B cell (primary cell): ENCODE measurements at regions of chr10 and their contacts with region 1.

Region 1: GRCh38 chr10:80144067-80144695 is 11.7 kb downstream of the PLAC9 start:
- DNase-seq: peak; percentile 59
- ATAC-seq: peak; percentile 72
- H3K4me3 ChIP-seq: peak overlapping the region in 4 of 5 experiments; percentile 18 to 55 (median 41)
- H3K4me3 Mint-ChIP-seq: peak overlapping the region; percentile 75
- H3K27ac ChIP-seq: no peak overlapping the region
- H3K27ac Mint-ChIP-seq: peak overlapping the region; percentile 81
- H3K4me1 ChIP-seq: peaks cover 14 to 17% of the 10 kb centered on the region in 2 donors
- H3K4me1 Mint-ChIP-seq: peaks cover 21% of the 10 kb centered on the region
- H3K27me3 ChIP-seq: peaks cover 0 to 2% (median 0%) of the 10 kb centered on the region in 4 experiments
- H3K27me3 Mint-ChIP-seq: peaks cover 21% of the 10 kb centered on the region
- CTCF ChIP-seq: peak; percentile 53

Region 2: GRCh38 chr10:80066809-80067208 is 77.4 kb before region 1 on chr10:
- CTCF ChIA-PET with region 1: no interaction called
- POLR2A ChIA-PET with region 1: no interaction called
- intact Hi-C with region 1: no loop called
- DNase-seq: no peak
- ATAC-seq: no peak
- H3K4me3 ChIP-seq: no peak overlapping the region
- H3K4me3 Mint-ChIP-seq: no peak overlapping the region
- H3K27ac ChIP-seq: no peak overlapping the region
- H3K27ac Mint-ChIP-seq: no peak overlapping the region
- H3K4me1 ChIP-seq: no peaks in the 10 kb centered on the region
- H3K4me1 Mint-ChIP-seq: no peaks in the 10 kb centered on the region
- H3K27me3 ChIP-seq: peaks cover 0 to 3% (median 0%) of the 10 kb centered on the region in 4 experiments
- H3K27me3 Mint-ChIP-seq: peaks cover 7% of the 10 kb centered on the region
- CTCF ChIP-seq: no peak

Region 3: DNA sequence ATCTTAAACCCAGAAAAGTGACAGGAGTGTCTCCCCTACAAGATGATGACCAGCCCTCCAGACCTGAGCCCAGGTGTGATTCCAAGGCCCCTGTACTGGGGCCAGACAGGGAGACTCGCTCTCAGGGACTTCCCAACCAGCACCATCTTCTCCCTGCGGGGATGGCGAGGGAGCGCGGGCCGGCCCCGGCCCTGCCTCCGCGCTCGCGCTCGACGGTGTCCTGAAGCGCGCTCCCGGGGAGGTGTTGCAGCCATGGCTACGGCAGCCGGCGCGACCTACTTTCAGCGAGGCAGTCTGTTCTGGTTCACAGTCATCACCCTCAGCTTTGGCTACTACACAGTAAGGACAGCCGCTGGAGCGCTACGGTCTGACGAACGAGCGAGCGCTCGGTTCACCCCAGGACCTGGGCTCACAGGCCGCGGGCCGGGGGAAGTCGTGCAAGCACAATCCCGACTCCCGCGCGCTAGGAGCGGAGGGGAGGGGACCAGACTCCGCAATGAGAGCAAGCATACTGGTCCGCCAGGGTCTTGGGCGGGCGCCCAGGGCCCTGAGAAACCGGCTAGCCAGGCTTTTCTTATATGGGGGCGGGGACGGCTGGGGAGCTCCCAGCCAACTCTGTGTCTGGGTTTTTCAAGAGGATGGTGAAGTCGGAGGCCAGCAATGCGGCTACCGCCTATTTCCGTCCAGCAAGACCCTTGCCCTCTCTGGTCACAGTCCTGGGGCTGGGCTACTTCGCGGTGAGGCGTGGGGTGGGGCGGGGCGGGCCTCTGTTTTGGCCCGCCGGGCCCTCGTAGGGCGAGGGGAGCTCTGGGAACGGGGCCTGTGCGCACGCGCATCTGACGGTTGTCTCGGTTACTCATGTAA is 65.5 kb before region 1 on chr10 and contains the start of gene TMEM254:
- CTCF ChIA-PET with region 1: interaction called, 8 read pairs
- POLR2A ChIA-PET with region 1: no interaction called
- intact Hi-C with region 1: loop called (anchors 5 kb)
- DNase-seq: peak; percentile 92
- ATAC-seq: peak; percentile 86
- H3K4me3 ChIP-seq: peak within 1 kb of the TSS; percentile 74 to 98 (median 97)
- H3K4me3 Mint-ChIP-seq: peak within 1 kb of the TSS; percentile 97
- H3K27ac ChIP-seq: peak within 1 kb of the TSS; percentile 84 to 90
- H3K27ac Mint-ChIP-seq: peak within 1 kb of the TSS; percentile 92
- H3K4me1 ChIP-seq: peaks cover 11 to 15% of the 10 kb centered on the region in 2 donors
- H3K4me1 Mint-ChIP-seq: peaks cover 16% of the 10 kb centered on the region
- H3K27me3 ChIP-seq: no peaks in the 10 kb centered on the region
- H3K27me3 Mint-ChIP-seq: no peaks in the 10 kb centered on the region
- CTCF ChIP-seq: no peak
- total RNA-seq, gene TMEM254: 13.1 and 13.7 TPM in 2 replicates

Region 4: DNA sequence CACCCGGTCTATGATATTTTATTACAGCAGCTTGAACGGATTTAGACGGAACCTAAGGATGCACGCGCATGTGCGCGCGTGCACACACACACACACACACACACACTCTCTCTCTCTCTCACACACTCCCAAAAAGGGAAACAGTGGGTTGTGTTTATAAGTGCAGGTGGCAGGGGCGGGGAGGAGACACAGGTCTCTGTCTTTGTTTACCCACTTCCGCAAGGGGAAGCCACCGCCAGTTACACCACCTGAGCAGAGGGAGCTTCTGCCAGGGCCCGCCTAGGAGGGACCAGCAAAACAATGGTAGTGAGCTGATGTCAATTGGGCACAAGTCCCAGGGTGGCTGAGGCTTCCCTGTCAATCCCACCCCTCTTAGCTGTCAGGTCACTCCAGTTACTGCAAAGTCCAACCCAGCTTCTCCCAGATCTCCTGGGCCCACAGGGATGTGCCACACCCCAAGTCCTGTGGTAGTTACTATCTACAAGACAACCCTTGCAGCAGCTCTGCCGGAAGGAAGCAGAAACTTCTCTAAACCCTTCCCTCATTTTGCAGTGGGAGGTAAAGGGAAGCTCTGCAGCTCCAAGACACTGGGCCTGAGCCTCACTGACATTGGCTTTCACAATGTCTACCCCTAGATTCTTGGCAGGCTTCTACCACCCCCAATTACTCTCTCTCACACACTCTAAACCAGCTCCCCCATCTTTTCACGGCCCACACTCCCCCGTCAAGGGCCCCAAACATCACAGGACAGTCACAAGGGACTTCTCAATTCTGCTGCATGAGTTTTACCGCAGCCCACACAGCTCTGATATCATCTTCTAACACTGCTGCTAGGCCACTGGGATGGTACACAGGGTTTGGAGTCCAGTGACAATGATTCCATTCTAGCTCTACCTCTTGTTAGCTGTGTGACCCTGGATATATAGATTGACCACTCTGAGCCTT is 43.6 kb after region 1 on chr10:
- CTCF ChIA-PET with region 1: interaction called, 21 read pairs
- POLR2A ChIA-PET with region 1: interaction called, 4 read pairs
- intact Hi-C with region 1: loop called (anchors 2 kb)
- DNase-seq: peak; percentile 94
- ATAC-seq: peak; percentile 91
- H3K4me3 ChIP-seq: peak overlapping the region; percentile 20 to 63 (median 43)
- H3K4me3 Mint-ChIP-seq: peak overlapping the region; percentile 78
- H3K27ac ChIP-seq: peak overlapping the region; percentile 94 to 96
- H3K27ac Mint-ChIP-seq: peak overlapping the region; percentile 94
- H3K4me1 ChIP-seq: peaks cover 63% of the 10 kb centered on the region in 2 donors
- H3K4me1 Mint-ChIP-seq: peaks cover 79% of the 10 kb centered on the region
- H3K27me3 ChIP-seq: no peaks in the 10 kb centered on the region
- H3K27me3 Mint-ChIP-seq: no peaks in the 10 kb centered on the region
- CTCF ChIP-seq: no peak

Region 5: DNA sequence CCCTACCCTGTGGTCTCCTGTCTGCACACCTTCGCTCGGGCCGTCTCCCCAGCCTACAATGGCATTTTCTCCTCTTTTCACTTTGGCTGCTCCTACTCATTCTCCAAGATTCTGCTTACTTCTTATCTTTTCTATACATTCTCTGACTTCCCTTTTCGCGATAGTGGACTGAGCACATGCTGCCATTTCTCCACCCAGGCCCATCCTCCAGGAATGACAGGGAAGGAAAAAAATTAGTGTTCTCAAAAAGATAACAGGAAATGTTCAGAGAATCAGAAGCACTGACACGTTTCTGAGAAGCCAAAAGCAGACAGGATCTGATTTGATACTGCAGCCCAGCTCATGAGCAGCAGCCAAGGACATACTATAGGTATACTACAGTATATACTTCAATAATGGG is 67.6 kb after region 1 on chr10:
- CTCF ChIA-PET with region 1: interaction called, 13 read pairs
- POLR2A ChIA-PET with region 1: interaction called, 6 read pairs
- intact Hi-C with region 1: loop called (anchors 5 kb)
- DNase-seq: no peak
- ATAC-seq: no peak
- H3K4me3 ChIP-seq: no peak overlapping the region
- H3K4me3 Mint-ChIP-seq: no peak overlapping the region
- H3K27ac ChIP-seq: no peak overlapping the region
- H3K27ac Mint-ChIP-seq: no peak overlapping the region
- H3K4me1 ChIP-seq: no peaks in the 10 kb centered on the region
- H3K4me1 Mint-ChIP-seq: no peaks in the 10 kb centered on the region
- H3K27me3 ChIP-seq: peaks cover 0 to 2% (median 0%) of the 10 kb centered on the region in 4 experiments
- H3K27me3 Mint-ChIP-seq: no peaks in the 10 kb centered on the region
- CTCF ChIP-seq: no peak